IMR-90 (cell line): ENCODE measurements at regions of chrX and their contacts with region 1.

Region 1: GRCh38 chrX:124023838-124024238 is 62.3 kb downstream of the STAG2 start:
- DNase-seq: peak; percentile 41
- ATAC-seq: peak; percentile 64
- H3K4me3 ChIP-seq: no peak overlapping the region
- H3K27ac ChIP-seq: no peak overlapping the region
- H3K4me1 ChIP-seq: no peaks in the 10 kb centered on the region
- H3K27me3 ChIP-seq: no peaks in the 10 kb centered on the region
- CTCF ChIP-seq: no peak
- POLR2A ChIP-seq: no peak
- RAD21 ChIP-seq: no peak

Region 2: DNA sequence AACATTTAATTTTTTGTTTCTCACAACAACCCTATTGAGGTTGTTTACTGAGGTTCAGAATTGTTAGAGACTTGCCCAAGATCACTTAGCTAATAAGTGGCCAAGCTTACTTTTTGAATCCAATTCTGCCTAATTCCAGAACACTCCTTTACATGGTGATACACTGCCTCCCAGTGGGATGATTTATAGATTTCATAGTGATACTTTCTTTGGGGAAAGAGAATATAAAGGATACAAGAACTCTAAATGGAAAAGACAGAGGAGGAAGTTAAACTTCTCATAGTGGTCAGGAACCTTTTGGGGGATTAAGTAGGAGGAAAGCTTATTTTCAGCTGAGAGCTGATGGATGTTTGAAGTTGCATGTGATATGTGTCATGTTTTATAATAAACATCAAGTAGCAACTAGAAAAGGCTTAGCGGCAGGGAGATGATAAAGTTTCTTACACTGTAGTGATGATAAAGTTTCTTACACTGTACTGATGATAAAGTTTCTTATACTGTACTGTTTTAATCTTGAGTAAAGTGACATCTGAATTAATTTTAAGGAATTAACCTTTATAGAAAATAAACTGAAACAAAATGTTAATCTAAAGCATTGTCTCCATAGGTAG is 47.0 kb before region 1 on chrX:
- CTCF ChIA-PET with region 1: no interaction called
- POLR2A ChIA-PET with region 1: no interaction called
- dilution Hi-C with region 1: no loop called
- in situ Hi-C with region 1: no loop called
- intact Hi-C with region 1: loop called (anchors 5 kb)
- DNase-seq: peak; percentile 47
- ATAC-seq: peak; percentile 67
- H3K4me3 ChIP-seq: no peak overlapping the region
- H3K27ac ChIP-seq: no peak overlapping the region
- H3K4me1 ChIP-seq: 0 out of 2 replicates have a peak, but pooled peaks cover 2% of the 10 kb centered on the region
- H3K27me3 ChIP-seq: no peaks in the 10 kb centered on the region
- CTCF ChIP-seq: peak; percentile 44
- POLR2A ChIP-seq: no peak
- RAD21 ChIP-seq: peak; percentile 67

Region 3: GRCh38 chrX:124548571-124548970 is 524.7 kb after region 1 on chrX:
- CTCF ChIA-PET with region 1: no interaction called
- POLR2A ChIA-PET with region 1: no interaction called
- dilution Hi-C with region 1: no loop called
- in situ Hi-C with region 1: no loop called
- intact Hi-C with region 1: no loop called
- DNase-seq: no peak
- ATAC-seq: no peak
- H3K4me3 ChIP-seq: no peak overlapping the region
- H3K27ac ChIP-seq: no peak overlapping the region
- H3K4me1 ChIP-seq: no peaks in the 10 kb centered on the region
- H3K27me3 ChIP-seq: no peaks in the 10 kb centered on the region
- CTCF ChIP-seq: no peak
- POLR2A ChIP-seq: no peak
- RAD21 ChIP-seq: no peak